ENCODE measurements at regions of chr1 and their contacts with region 1.

Region 1: GRCh38 chr1:97524211-97524610 is 396.6 kb downstream of the DPYD start:
- DNase-seq: no peak
- H3K4me3 ChIP-seq: no peak overlapping the region
- H3K27ac ChIP-seq: no peak overlapping the region
- H3K4me1 ChIP-seq: no peaks in the 10 kb centered on the region
- H3K27me3 ChIP-seq: no peaks in the 10 kb centered on the region
- CTCF ChIP-seq: no peak
- EP300 ChIP-seq: no peak
- POLR2A ChIP-seq: no peak
- RAD21 ChIP-seq: no peak

Region 2: DNA sequence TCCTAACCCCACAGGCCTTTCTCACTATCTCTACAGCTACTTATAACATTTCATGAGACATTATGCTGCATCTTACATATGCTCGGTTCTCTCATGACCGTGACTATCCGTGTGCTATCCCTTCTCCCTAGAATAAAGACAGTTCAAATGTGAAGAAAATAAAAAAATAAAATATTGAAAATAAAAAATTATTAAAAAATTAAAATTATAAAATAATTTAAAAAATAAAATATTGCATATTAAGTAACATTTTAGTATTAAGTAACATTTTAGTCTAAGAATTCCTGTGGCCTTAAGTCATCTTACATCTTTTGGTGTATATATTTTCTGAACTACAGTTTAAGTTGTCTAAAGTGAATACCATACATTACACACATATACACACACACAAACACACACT is 18.9 kb before region 1 on chr1:
- CTCF ChIA-PET with region 1: interaction called, 16 read pairs
- POLR2A ChIA-PET with region 1: no interaction called
- DNase-seq: no peak
- H3K4me3 ChIP-seq: no peak overlapping the region
- H3K27ac ChIP-seq: no peak overlapping the region
- H3K4me1 ChIP-seq: no peaks in the 10 kb centered on the region
- H3K27me3 ChIP-seq: no peaks in the 10 kb centered on the region
- CTCF ChIP-seq: no peak
- EP300 ChIP-seq: no peak
- POLR2A ChIP-seq: no peak
- RAD21 ChIP-seq: no peak

Region 3: DNA sequence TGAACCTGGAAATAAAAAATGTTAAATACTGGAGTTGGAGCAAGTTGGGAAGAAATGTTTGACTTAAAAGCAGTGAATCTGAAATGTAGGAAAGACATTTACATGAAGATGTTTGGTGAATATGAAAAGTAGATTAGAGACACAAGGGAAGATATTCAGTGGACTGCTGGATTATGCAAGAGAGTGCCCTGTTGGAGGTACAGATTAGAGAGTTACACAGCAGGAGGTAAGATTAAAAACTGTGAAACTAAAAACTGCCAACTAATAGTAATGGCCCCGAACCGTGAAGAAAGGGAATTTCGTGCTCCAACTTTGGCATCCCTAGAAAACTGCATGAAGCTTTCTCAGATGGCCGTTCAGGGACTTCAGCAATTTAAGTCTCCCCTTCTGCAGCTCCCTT is 21.2 kb after region 1 on chr1:
- CTCF ChIA-PET with region 1: interaction called, 10 read pairs
- POLR2A ChIA-PET with region 1: no interaction called
- DNase-seq: no peak
- H3K4me3 ChIP-seq: no peak overlapping the region
- H3K27ac ChIP-seq: no peak overlapping the region
- H3K4me1 ChIP-seq: no peaks in the 10 kb centered on the region; a peak in 1 of 7 replicates
- H3K27me3 ChIP-seq: no peaks in the 10 kb centered on the region
- CTCF ChIP-seq: no peak
- EP300 ChIP-seq: no peak
- POLR2A ChIP-seq: no peak
- RAD21 ChIP-seq: no peak

Region 4: DNA sequence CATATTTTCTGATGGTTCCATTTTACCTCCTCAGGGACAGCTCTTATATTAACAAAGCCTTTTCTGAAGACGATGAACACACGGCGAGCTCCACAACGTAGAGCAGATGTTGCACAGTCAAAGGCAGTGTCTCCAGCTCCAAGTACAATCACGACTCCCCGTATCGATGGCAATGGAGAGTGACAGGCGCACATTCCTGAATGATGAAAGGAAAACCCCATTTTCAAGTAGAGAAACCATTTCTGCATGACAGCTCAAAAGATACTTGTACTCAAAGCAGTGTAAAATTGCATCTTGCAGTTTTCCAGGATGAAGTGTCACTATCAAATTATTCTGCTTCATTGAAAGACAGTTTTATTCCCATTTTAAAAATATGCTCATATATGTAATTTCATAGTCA is 69.0 kb after region 1 on chr1:
- CTCF ChIA-PET with region 1: no interaction called
- POLR2A ChIA-PET with region 1: no interaction called
- DNase-seq: no peak
- H3K4me3 ChIP-seq: no peak overlapping the region
- H3K27ac ChIP-seq: no peak overlapping the region
- H3K4me1 ChIP-seq: no peaks in the 10 kb centered on the region
- H3K27me3 ChIP-seq: no peaks in the 10 kb centered on the region
- CTCF ChIP-seq: no peak
- EP300 ChIP-seq: no peak
- POLR2A ChIP-seq: no peak
- RAD21 ChIP-seq: no peak